Dendritic cell treated with granulocyte-macrophage colony-stimulating factor and Interleukin-4, amounts not matched to agents 40 ng/mL and 50 ng/mL, for 4 days (primary cell): ENCODE measurements at regions of chr3 and their contacts with region 1.

Region 1: DNA sequence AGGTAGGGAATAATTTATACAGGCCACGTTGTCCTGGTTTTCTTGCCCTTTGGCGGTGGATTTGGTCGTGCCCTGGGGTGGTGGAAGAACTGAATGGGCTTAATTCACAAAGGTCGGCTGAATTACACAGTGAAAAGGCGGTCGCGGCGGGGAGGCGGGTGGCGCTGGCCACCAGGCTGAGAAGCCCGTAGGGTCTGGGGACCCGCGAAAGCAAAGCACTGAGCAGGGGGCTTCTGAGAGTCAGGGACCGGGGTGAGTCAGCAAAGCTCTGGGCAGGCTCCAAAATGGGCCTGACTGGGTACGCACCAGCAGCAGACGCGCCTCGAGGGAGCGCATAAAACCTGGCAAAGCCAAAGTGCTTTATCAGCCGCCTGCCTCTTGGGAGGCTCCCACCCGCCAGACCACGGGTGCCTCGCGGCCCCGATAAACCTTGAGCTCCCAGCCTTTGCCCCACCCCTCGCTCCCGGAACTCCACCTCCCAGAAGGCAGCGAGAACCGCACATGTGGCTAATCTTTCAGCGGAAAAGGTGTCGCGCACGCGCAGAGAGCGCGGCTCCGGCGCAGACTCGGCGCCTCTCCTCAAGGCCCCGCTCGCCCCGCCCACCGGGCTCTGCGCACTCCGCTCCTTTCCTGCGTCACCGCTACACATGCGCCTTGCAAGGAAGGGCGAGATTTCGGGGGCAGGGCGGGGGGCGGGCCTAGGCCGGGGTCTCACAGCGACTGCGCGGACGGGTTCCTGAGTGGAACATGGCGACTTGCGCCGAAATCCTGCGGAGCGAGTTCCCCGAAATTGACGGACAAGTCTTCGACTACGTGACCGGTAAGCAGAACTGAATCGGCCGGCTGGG is at the start of gene ABCF3:
- H3K4me3 Mint-ChIP-seq: peak within 1 kb of the TSS; percentile 96
- H3K27ac Mint-ChIP-seq: peak within 1 kb of the TSS; percentile 94
- H3K4me1 Mint-ChIP-seq: peaks cover 76% of the 10 kb centered on the region
- H3K27me3 Mint-ChIP-seq: no peaks in the 10 kb centered on the region

Region 2: DNA sequence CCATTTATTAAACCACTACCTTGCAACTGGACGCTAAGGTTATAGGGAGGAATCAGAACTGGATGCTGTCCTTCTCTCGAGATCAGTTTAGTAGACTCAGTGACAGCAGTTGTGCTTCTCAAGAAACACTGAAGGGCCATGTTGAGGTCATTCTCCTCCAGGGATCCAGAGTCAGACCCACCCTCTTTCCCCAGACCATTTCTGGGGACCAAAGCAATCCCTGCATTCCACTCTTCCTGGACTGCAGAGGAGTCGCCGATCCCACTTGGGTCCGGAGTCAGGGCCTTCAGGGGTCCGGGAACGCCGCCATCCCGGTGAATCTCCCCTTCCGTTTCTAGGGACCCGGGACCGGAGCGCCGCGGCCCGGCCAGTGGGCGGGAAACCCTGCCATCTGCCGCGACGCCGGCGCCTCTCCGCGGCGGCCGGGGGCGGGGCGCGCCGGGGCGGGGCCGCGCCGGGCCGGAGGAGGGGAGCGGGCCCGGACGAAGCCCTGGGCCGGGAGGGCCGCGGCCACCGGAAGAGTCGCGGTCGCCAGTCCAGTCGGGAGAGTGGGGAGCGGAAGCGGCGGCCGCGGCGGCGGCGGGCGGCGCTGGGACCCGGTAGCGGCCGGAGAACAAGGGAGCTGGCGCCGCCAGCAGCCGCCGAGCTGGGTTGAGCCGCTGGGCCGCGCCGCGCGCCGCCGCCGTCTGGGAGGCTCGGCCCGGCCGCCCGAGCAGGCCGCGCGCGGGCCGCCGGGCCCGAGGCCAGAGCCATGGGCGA is 30.6 kb before region 1 on chr3 and contains the start of gene DVL3:
- intact Hi-C with region 1: no loop called
- H3K4me3 Mint-ChIP-seq: peak within 1 kb of the TSS; percentile 96
- H3K27ac Mint-ChIP-seq: peak within 1 kb of the TSS; percentile 87
- H3K4me1 Mint-ChIP-seq: peaks cover 40% of the 10 kb centered on the region
- H3K27me3 Mint-ChIP-seq: no peaks in the 10 kb centered on the region

Region 3: GRCh38 chr3:184174646-184175492 is 10.8 kb before region 1 on chr3 and contains the start of gene AP2M1:
- intact Hi-C with region 1: loop called (anchors 1 kb)
- H3K4me3 Mint-ChIP-seq: peak within 1 kb of the TSS; percentile 99
- H3K27ac Mint-ChIP-seq: peak within 1 kb of the TSS; percentile 98
- H3K4me1 Mint-ChIP-seq: peaks cover 54% of the 10 kb centered on the region
- H3K27me3 Mint-ChIP-seq: no peaks in the 10 kb centered on the region

Region 4: GRCh38 chr3:184395320-184395660 is 209.6 kb after region 1 on chr3:
- intact Hi-C with region 1: no loop called
- H3K4me3 Mint-ChIP-seq: no peak overlapping the region
- H3K27ac Mint-ChIP-seq: no peak overlapping the region
- H3K4me1 Mint-ChIP-seq: no peaks in the 10 kb centered on the region
- H3K27me3 Mint-ChIP-seq: peaks cover 39% of the 10 kb centered on the region

Region 5: GRCh38 chr3:184716622-184717398 is 531.1 kb after region 1 on chr3:
- intact Hi-C with region 1: no loop called
- H3K4me3 Mint-ChIP-seq: no peak overlapping the region
- H3K27ac Mint-ChIP-seq: peak overlapping the region; percentile 58
- H3K4me1 Mint-ChIP-seq: peaks cover 36% of the 10 kb centered on the region
- H3K27me3 Mint-ChIP-seq: no peaks in the 10 kb centered on the region